Activated B cell treated with CpG ODN at 0.5 μM for 24 hours (primary cell): ENCODE measurements at regions of chr6 and their contacts with region 1.

Region 1: GRCh38 chr6:24402697-24403501 is at the start of gene MRS2:
- DNase-seq: peak; percentile 75
- ATAC-seq: peak; percentile 96
- H3K4me3 Mint-ChIP-seq: peak within 1 kb of the TSS; percentile 96
- H3K27ac Mint-ChIP-seq: peak within 1 kb of the TSS; percentile 78
- H3K4me1 Mint-ChIP-seq: peaks cover 31% of the 10 kb centered on the region
- H3K27me3 Mint-ChIP-seq: peaks cover 8% of the 10 kb centered on the region
- CTCF ChIP-seq: no peak
- total RNA-seq, gene MRS2: 21.8 and 24.3 TPM in 2 replicates

Region 2: GRCh38 chr6:24283043-24283985 is 119.6 kb before region 1 on chr6:
- CTCF ChIA-PET with region 1: no interaction called
- POLR2A ChIA-PET with region 1: no interaction called
- intact Hi-C with region 1: loop called (anchors 5 kb)
- DNase-seq: no peak
- ATAC-seq: peak; percentile 40
- H3K4me3 Mint-ChIP-seq: no peak overlapping the region
- H3K27ac Mint-ChIP-seq: no peak overlapping the region
- H3K4me1 Mint-ChIP-seq: no peaks in the 10 kb centered on the region
- H3K27me3 Mint-ChIP-seq: peaks cover 6% of the 10 kb centered on the region
- CTCF ChIP-seq: no peak

Region 3: DNA sequence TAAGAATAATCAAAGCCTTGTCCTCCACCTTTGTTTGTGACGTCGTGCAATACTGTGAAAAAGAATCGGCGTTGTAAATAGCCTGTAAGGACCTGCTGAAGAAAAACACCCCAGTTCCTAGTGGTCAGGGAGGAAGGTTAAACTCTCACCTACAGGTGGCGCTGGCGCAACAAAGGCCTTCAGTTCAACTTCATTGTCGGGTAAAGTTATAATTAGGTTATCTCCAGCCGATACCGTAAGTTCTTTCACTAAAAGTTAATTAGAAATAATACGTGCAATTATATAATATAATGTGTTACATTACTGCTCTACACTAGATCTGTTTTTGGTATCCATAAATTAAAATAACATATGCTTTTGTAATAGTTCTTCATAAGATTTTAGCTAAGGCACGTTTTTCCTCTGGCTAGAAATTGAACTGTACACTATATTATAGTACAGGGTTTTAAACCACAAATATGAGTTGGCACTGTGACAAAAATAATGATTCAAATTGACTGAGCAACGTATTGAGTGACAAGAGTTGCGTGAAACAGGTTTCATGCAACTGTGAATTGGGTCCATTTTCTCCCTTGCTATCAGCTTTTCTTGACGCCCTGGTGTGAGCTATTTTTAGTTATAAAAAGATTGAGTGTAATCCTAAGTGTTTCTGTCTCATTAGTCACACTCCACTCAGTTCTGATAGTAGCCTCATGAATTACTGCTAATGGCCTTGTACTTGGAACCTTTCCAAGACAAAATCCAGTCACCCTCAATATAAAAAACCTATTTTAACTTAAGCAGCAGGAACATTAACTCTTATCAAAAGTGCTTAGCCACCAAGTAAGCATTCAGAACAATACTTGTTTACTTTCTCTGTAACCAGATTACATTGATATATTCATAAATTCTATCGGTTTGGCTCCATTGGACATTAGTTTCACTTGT is 180.8 kb after region 1 on chr6:
- CTCF ChIA-PET with region 1: no interaction called
- POLR2A ChIA-PET with region 1: no interaction called
- intact Hi-C with region 1: no loop called
- DNase-seq: peak; percentile 37
- ATAC-seq: peak; percentile 81
- H3K4me3 Mint-ChIP-seq: no peak overlapping the region
- H3K27ac Mint-ChIP-seq: no peak overlapping the region
- H3K4me1 Mint-ChIP-seq: peaks cover 2% of the 10 kb centered on the region
- H3K27me3 Mint-ChIP-seq: peaks cover 4% of the 10 kb centered on the region
- CTCF ChIP-seq: peak; percentile 66

Region 4: DNA sequence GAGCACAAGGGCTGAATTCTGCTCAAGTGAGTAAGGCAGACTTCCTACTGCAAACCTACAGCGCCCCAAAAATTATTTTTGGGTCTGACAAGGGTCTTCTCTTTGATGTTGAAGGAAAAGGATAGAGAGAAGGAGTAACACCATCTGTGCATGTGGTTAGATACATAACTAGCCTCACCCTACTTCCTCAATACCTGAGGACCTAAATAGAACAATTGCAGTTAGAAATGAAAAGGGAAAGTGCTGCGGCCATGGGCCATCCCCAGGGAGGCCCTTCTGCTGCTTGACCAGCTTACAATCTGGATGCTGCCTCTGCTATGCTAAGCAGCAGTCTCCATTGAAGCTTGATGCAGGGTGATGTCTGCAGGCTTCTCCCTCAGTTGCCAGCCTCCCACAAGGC is 459.0 kb after region 1 on chr6:
- CTCF ChIA-PET with region 1: no interaction called
- POLR2A ChIA-PET with region 1: no interaction called
- intact Hi-C with region 1: no loop called
- DNase-seq: peak; percentile 23
- ATAC-seq: peak; percentile 59
- H3K4me3 Mint-ChIP-seq: peak overlapping the region; percentile 15
- H3K27ac Mint-ChIP-seq: peak overlapping the region; percentile 92
- H3K4me1 Mint-ChIP-seq: peaks cover 94% of the 10 kb centered on the region
- H3K27me3 Mint-ChIP-seq: no peaks in the 10 kb centered on the region
- CTCF ChIP-seq: no peak

Region 5: DNA sequence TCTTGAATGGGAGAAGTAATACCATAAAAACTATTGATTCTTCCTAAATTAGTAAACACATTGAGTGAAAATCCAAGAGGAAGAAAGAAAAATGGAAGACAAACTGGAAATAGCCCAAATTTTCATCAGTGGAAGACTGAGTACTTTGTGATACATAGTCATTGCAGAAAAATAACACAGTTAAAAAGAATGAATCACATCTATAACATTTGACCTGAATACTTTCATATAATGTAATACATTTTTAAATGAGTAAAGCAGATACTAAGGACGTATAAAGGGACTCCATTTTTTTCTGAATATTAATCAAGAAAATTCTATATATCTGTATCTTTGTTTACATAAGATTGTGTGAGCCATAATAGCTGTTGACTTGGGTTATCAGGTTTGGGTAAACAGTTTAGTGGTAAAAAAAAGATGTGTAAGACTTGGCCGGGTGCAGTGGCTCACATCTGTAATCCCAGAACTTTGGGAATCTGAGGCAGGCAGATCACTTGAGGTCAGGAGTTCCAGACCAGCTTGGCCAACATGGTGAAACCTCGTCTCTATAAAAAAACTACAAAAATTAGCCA is 1531.9 kb after region 1 on chr6:
- CTCF ChIA-PET with region 1: no interaction called
- POLR2A ChIA-PET with region 1: no interaction called
- intact Hi-C with region 1: no loop called
- DNase-seq: no peak
- ATAC-seq: no peak
- H3K4me3 Mint-ChIP-seq: no peak overlapping the region
- H3K27ac Mint-ChIP-seq: no peak overlapping the region
- H3K4me1 Mint-ChIP-seq: no peaks in the 10 kb centered on the region
- H3K27me3 Mint-ChIP-seq: peaks cover 10% of the 10 kb centered on the region
- CTCF ChIP-seq: no peak